Prostate gland (tissue), 2 donors: ENCODE measurements at regions of chr12 and their contacts with region 1.

Region 1: GRCh38 chr12:49188914-49189367 is at the start of gene TUBA1A:
- DNase-seq: peak; percentile 86
- H3K4me3 ChIP-seq: peak within 1 kb of the TSS; percentile 63 to 77
- H3K27ac ChIP-seq: peak within 1 kb of the TSS; percentile 93 to 98
- H3K4me1 ChIP-seq: peaks cover 2% of the 10 kb centered on the region
- H3K27me3 ChIP-seq: no peaks in the 10 kb centered on the region
- CTCF ChIP-seq: no peak
- POLR2A ChIP-seq: peak; percentile 89
- total RNA-seq, gene TUBA1A: 81.6 to 253 TPM

Region 2: DNA sequence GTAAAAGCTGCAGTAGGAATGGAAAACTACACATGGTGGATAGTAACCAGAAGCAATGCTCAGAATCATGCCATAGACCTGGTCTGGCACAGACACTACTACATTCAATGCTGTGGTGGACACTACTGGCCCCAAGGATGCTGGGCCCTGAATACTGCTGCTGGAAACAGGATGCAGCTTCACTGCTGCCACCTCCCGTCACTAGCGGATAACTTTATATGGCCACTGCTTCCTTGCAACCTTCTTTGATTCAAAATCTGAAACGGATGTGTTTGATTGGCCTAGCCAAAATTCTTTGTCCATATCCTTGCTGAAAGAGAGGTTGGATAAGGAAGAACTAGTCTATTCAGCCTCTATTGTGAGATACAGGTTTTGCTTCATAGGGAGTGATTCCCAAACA is 430.7 kb before region 1 on chr12:
- intact Hi-C with region 1: no loop called
- DNase-seq: no peak
- H3K4me3 ChIP-seq: no peak overlapping the region
- H3K27ac ChIP-seq: no peak overlapping the region
- H3K4me1 ChIP-seq: no peaks in the 10 kb centered on the region
- H3K27me3 ChIP-seq: no peaks in the 10 kb centered on the region
- CTCF ChIP-seq: no peak
- POLR2A ChIP-seq: no peak

Region 3: DNA sequence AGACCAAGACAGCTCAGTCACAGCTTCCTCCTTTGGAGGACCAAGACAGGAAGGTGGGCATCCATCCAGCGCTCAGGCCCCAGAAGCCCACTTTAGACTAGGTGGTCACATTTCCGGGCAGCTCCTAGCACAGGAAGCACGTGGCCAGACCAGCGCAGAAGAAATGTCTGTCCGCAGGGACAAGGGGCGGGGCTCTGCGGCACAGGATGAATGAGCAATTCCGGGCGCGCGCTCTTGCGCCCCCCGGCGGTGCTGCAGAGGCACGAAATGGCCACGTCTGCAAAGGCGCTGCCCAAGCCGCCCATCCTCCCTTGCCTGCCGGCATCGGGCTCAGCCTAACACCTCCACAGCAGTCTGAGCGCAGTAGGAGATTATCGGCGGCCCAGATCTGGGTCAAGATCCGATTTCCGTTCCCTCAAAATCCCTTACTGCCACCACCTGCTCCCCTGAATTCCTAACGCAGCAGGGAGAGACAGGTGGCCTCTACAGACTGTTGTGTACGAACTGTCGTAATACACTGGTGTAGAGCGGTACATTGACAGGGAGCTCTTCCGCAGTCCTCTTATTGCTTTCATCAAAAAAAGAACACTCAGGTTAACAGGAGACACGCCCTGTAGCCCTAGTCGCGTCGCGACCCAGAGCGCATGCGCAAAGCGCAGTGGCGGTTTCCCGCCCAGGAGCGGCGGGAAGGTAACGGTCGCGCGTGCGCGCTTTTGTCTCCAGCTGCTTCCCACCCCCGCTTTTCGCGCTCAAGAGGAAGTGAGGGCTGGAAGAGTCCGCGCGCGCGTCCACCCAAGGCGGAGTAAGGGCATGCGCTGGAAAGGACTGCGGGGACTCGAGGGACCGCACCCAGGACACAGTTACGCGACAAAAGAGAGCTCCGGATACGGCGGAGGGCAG is 58.5 kb before region 1 on chr12:
- intact Hi-C with region 1: loop called (anchors 2 kb)
- DNase-seq: peak; percentile 92
- H3K4me3 ChIP-seq: peak overlapping the region; percentile 85 to 97
- H3K27ac ChIP-seq: peak overlapping the region; percentile 98 to 100
- H3K4me1 ChIP-seq: no peaks in the 10 kb centered on the region
- H3K27me3 ChIP-seq: no peaks in the 10 kb centered on the region
- CTCF ChIP-seq: peak; percentile 73 to 93 (median 89)
- POLR2A ChIP-seq: peak; percentile 66

Region 4: DNA sequence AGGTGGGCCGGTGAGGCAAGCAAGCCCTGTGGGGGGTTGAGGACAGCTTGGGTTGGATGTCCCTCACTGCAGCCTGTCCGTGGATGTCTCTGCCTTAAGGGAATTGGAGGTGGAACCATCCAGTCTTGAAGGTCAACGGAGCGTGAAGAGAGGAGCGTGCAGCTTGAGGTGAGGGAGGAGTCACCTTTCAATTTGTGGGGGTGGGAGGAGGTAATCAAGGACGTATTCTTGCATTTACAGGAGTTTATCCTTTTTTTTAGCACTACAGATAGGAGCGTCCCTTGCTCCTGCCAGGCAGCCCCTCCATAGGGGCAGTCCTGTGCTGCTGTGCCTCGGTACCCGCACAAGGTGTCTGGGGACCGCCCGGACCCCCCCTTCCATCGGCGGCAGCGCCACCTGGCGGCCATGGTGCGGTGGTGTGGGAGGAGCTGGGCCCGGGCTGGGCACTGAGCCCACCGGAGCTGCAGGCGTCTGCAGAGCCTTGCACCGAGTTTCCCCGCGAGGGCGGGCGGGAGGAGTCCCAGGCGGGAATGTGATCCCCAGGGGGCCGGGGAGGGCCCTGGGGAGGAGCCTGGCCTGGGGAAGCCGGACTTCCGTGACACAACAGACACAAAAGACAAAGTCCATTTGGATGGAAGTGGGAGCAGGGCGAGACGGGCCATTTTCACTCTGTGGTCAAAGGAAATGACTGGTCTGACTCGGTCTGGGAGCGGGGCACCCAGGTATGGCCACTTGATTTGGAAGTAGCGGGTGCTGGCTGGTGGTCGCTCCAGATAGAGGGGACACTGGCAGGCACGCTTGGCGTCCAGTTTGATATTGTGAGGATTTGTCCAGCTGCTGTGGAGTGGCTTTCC is 158.7 kb after region 1 on chr12:
- intact Hi-C with region 1: no loop called
- DNase-seq: peak; percentile 51
- H3K4me3 ChIP-seq: peak overlapping the region; percentile 13 to 29
- H3K27ac ChIP-seq: no peak overlapping the region
- H3K4me1 ChIP-seq: peaks cover 29% of the 10 kb centered on the region
- H3K27me3 ChIP-seq: peaks cover 11% of the 10 kb centered on the region
- CTCF ChIP-seq: peak; percentile 81 to 90 (median 84)
- POLR2A ChIP-seq: no peak